Activated CD8-positive, alpha-beta memory T cell treated with anti-CD3 and anti-CD28 coated beads, Interleukin-2, amount 10 ng/mL, durations not matched to agents 7 days and 5 days (primary cell): ENCODE measurements at regions of chr11 and their contacts with region 1.

Region 1: GRCh38 chr11:13955971-13956421 is 6.5 kb upstream of the SPON1 start:
- DNase-seq: peak; percentile 65
- ATAC-seq: peak; percentile 58
- H3K4me3 Mint-ChIP-seq: no peak overlapping the region
- H3K27ac Mint-ChIP-seq: no peak overlapping the region
- H3K4me1 Mint-ChIP-seq: no peaks in the 10 kb centered on the region
- H3K27me3 Mint-ChIP-seq: peaks cover 33% of the 10 kb centered on the region

Region 2: GRCh38 chr11:13680501-13681264 is 275.3 kb before region 1 on chr11:
- CTCF ChIA-PET with region 1: no interaction called
- DNase-seq: no peak
- ATAC-seq: no peak
- H3K4me3 Mint-ChIP-seq: no peak overlapping the region
- H3K27ac Mint-ChIP-seq: no peak overlapping the region
- H3K4me1 Mint-ChIP-seq: peaks cover 17% of the 10 kb centered on the region
- H3K27me3 Mint-ChIP-seq: no peaks in the 10 kb centered on the region

Region 3: DNA sequence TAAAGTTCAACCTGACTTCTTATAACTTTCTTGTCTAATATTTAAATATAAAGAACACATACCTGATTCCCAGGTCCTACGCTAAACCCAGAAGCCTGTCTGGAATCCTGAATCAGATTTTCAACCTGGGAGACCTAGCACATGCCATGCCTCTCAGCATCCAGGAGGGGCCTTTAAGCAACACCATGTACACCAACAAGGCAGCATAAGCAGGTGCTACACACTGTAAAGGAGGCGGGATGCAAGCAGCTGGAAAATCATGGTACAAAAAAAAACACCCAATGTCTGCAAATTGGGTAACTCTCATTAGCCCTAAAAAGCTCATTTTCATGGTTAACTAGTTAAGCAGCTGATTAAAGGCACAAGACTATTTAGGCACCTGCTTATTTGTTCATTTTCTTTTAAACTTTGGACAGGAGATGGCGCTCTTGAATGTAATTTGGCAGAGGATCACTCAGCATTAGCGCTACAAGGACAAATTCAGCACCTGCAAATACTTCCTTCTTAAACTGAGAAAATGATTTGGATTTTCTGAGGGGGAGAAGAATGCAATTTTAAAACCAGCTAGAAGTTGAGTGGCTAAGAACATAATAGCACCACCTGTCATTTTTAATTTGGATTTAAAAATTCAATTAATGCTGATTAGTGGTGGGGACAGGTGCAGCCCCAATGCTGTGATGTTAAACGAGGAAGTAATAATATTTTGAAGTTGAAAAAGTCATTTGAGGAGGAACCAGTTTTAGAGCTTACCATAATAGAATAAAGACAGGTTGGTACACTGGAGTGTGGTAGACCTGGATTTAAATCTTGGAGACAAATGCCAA is 183.6 kb before region 1 on chr11:
- CTCF ChIA-PET with region 1: interaction called, 12 read pairs
- DNase-seq: no peak
- ATAC-seq: peak; percentile 75
- H3K4me3 Mint-ChIP-seq: no peak overlapping the region
- H3K27ac Mint-ChIP-seq: no peak overlapping the region
- H3K4me1 Mint-ChIP-seq: no peaks in the 10 kb centered on the region
- H3K27me3 Mint-ChIP-seq: peaks cover 10% of the 10 kb centered on the region

Region 4: DNA sequence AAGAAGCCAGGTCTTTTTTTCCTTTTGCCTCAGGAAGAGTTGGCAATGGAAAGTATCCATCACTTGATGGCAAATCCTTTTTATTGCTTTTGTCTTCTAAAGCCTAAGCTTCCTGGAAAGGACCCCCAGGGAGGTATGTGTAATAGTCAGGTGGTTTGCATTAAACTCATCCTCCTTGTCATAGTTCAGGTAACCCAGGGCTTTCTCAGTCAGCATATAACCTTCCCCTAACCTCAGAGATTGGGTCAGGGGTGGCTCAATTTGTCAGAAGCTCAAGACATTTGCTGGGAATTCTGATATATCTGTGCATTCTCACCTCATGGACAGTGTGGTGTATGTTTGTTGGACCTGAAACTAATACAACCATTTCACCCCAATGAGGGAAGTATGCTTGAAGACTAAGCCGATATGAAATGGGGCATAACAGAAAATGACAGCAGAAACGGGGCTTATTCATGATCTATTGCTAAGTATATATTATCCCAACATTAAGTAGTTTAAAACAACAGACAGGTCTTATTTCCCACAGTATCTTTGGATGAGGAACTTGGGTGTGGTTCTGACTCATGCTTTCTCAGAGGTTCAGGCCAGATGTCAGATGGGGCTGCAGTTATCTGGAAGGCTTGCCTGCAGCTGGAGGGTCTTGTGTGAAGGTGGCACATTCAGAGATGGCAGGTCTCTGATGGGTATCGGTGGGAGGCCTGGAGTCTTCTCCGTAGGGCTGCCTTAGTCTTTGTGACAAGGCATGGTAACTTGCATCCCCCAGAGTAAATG is 129.3 kb before region 1 on chr11:
- CTCF ChIA-PET with region 1: no interaction called
- DNase-seq: no peak
- ATAC-seq: no peak
- H3K4me3 Mint-ChIP-seq: no peak overlapping the region
- H3K27ac Mint-ChIP-seq: no peak overlapping the region
- H3K4me1 Mint-ChIP-seq: no peaks in the 10 kb centered on the region
- H3K27me3 Mint-ChIP-seq: peaks cover 5% of the 10 kb centered on the region

Region 5: GRCh38 chr11:13939952-13940610 is 15.9 kb before region 1 on chr11:
- CTCF ChIA-PET with region 1: interaction called, 10 read pairs
- DNase-seq: no peak
- ATAC-seq: no peak
- H3K4me3 Mint-ChIP-seq: no peak overlapping the region
- H3K27ac Mint-ChIP-seq: peak overlapping the region; percentile 68
- H3K4me1 Mint-ChIP-seq: peaks cover 36% of the 10 kb centered on the region
- H3K27me3 Mint-ChIP-seq: peaks cover 4% of the 10 kb centered on the region

Region 6: GRCh38 chr11:13970986-13971385 is 15.0 kb after region 1 on chr11:
- CTCF ChIA-PET with region 1: interaction called, 20 read pairs
- DNase-seq: no peak
- ATAC-seq: peak; percentile 27
- H3K4me3 Mint-ChIP-seq: no peak overlapping the region
- H3K27ac Mint-ChIP-seq: no peak overlapping the region
- H3K4me1 Mint-ChIP-seq: peaks cover 44% of the 10 kb centered on the region
- H3K27me3 Mint-ChIP-seq: peaks cover 25% of the 10 kb centered on the region

Region 7: GRCh38 chr11:14015476-14016110 is 59.6 kb after region 1 on chr11:
- CTCF ChIA-PET with region 1: no interaction called
- DNase-seq: no peak
- ATAC-seq: no peak
- H3K4me3 Mint-ChIP-seq: no peak overlapping the region
- H3K27ac Mint-ChIP-seq: no peak overlapping the region
- H3K4me1 Mint-ChIP-seq: no peaks in the 10 kb centered on the region
- H3K27me3 Mint-ChIP-seq: no peaks in the 10 kb centered on the region

Region 8: DNA sequence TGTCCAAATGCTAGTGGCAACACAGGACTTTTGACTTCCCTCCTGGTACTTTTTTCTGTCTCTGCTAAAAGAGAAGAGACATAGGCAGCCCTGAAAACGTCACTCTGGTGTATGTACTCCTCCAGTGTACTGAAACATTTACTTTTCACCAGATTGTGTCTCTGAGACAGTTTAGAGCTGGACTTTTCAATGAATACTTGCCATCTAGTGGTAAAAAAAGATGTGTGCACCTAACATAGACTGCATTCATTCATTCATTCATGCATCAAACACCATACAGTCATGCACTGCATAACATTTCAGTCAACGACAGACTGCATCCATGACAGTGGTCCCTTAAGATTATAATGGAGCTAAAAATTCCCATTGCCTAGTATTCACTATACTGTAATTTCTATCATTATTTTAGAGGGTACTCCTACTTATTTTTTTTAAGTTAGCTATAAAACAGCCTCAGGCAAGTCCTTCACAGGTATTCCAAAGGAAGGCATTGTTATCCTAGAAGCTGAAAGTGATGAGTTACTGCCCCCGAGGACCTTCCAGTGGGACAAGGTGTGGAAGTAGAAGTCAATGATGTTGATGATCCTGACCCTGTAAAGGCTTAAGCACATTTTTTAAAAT is 192.8 kb after region 1 on chr11:
- CTCF ChIA-PET with region 1: interaction called, 40 read pairs
- DNase-seq: no peak
- ATAC-seq: peak; percentile 67
- H3K4me3 Mint-ChIP-seq: no peak overlapping the region
- H3K27ac Mint-ChIP-seq: no peak overlapping the region
- H3K4me1 Mint-ChIP-seq: peaks cover 6% of the 10 kb centered on the region
- H3K27me3 Mint-ChIP-seq: peaks cover 6% of the 10 kb centered on the region

Region 9: DNA sequence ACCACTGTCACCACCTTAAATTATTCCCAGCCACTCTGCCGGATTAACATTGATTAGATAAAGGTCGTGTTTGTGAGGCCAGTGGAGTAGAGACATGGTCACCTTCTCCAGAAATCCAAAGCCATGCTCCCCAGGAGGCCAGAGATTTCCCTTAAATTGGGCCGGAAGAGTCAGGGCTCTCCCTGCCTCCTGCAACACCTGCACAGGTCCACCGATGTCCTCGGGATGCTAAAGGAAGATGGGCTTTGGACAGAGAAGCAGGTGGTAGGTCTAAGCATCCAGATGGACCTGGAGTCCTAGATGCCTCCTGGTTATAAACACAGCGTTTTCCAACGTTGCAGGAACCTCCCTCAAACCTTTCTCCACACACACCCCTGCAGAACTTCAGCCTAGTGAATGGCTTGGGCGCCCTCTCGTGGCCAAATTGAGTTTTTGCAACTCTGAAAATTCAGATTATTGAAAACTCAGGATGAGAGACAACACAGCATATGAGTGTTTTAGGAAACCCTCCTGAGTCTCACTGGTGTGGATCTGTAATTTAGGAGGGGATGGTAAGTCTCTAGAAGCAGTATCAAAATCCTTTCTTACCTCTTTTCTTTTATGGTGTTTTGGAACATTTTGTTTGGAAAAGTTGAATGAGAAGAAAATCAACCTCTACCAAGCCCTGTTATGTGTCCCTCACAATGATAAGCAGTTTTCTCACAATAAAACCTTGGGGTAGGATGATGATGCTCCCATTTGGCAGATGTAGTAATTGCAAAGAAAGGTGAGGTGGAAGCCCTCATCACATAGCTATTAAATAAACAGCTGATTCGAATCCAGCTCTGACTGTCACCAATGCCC is 293.3 kb after region 1 on chr11:
- CTCF ChIA-PET with region 1: interaction called, 17 read pairs
- DNase-seq: peak; percentile 79
- ATAC-seq: peak; percentile 72
- H3K4me3 Mint-ChIP-seq: peak overlapping the region; percentile 0
- H3K27ac Mint-ChIP-seq: no peak overlapping the region
- H3K4me1 Mint-ChIP-seq: peaks cover 23% of the 10 kb centered on the region
- H3K27me3 Mint-ChIP-seq: peaks cover 13% of the 10 kb centered on the region